Transverse colon (tissue), 4 donors: ENCODE measurements at regions of chr16 and their contacts with region 1.

Region 1: DNA sequence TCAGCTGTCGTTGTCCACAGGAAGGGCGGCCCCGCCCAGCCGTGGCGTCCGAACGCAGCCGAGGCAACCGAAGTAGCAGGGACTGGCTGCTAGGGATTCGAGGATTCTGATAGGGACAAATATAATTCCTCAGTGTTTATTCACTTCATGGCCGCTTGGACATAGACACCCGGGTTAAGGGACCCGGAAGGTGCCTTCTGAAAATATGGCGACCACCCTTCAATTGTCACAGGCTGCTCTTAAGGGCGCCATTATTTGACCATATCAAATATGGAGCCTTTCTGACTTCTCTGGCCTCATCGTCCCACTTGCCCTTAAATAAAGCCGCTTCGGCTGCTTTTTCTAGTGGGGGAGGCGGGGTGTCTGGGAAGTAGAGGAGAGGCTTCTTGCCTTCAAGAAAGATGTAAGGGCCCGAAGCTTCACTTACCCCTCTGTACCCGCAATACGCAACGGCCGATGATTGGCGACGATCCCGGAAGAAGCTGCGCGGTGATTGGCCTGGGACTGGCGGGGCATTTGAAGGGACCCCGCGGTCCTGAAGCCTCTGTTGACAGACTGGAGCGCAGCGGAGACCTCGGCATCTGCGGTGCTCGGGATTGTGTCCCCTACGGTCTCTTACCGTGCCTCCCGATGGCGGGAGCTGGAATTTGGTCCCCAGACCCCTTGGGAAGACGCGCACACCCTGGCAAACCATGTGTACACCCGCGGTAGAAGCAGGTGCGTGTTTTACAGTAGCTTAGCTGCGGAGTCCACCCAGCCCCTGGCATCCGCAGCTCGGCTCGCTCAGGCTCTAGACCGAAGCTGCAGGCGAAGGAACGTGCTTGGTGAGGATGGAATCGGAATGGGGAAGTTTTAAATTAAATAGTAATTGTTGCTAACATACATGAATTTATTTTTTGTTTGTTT is at the start of gene ZNF688:
- DNase-seq: peak; percentile 96
- H3K4me3 ChIP-seq: peak within 1 kb of the TSS; percentile 81 to 92 (median 82)
- H3K27ac ChIP-seq: peak within 1 kb of the TSS; percentile 99 to 100 (median 99)
- H3K4me1 ChIP-seq: peaks cover 12 to 34% (median 24%) of the 10 kb centered on the region in 4 donors
- H3K27me3 ChIP-seq: no peaks in the 10 kb centered on the region
- CTCF ChIP-seq: peak in 1 of 5 experiments; percentile 39
- EP300 ChIP-seq: no peak
- POLR2A ChIP-seq: peak; percentile 74
- total RNA-seq, gene ZNF688: 22.9 to 64.3 (median 43.5) TPM

Region 2: GRCh38 chr16:30628627-30629540 is 56.9 kb after region 1 on chr16:
- in situ Hi-C with region 1: loop called in 1 of 4 experiments (anchors 10 kb)
- intact Hi-C with region 1: loop called (anchors 10 kb)
- DNase-seq: peak; percentile 93
- H3K4me3 ChIP-seq: peak overlapping the region in 2 of 4 donors; percentile 14 to 24
- H3K27ac ChIP-seq: peak overlapping the region; percentile 44 to 68 (median 64)
- H3K4me1 ChIP-seq: peaks cover 0 to 10% (median 4%) of the 10 kb centered on the region in 4 donors
- H3K27me3 ChIP-seq: no peaks in the 10 kb centered on the region
- CTCF ChIP-seq: peak; percentile 87 to 96 (median 89)
- EP300 ChIP-seq: no peak
- POLR2A ChIP-seq: no peak

Region 3: DNA sequence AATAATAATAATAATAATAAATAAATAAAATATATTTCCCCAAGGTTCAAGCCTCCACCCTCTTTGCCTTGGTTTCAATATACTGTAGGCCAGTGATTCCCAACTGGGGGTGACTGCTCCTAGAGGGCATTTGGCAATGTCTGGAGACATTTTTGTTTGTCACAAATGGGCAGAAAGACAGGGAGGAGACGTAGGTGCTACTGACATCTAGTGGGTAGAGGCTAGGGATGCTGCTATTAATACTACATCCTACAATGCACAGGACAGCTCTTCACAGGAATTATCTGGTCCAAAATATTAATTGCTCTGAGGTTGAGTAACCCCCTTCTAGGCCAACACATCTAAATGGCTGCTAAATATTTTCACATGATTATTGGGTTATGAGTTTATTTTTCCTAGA is 66.0 kb after region 1 on chr16:
- in situ Hi-C with region 1: loop called in 1 of 4 experiments (anchors 10 kb)
- intact Hi-C with region 1: no loop called
- DNase-seq: no peak
- H3K4me3 ChIP-seq: no peak overlapping the region
- H3K27ac ChIP-seq: no peak overlapping the region
- H3K4me1 ChIP-seq: peaks cover 0 to 22% (median 8%) of the 10 kb centered on the region in 4 donors
- H3K27me3 ChIP-seq: no peaks in the 10 kb centered on the region
- CTCF ChIP-seq: peak in 3 of 5 experiments; percentile 12 to 13 (median 13)
- EP300 ChIP-seq: no peak
- POLR2A ChIP-seq: no peak

Region 4: GRCh38 chr16:30853758-30854157 is 281.8 kb after region 1 on chr16:
- in situ Hi-C with region 1: no loop called
- intact Hi-C with region 1: no loop called
- DNase-seq: no peak
- H3K4me3 ChIP-seq: no peak overlapping the region
- H3K27ac ChIP-seq: no peak overlapping the region
- H3K4me1 ChIP-seq: no peaks in the 10 kb centered on the region
- H3K27me3 ChIP-seq: no peaks in the 10 kb centered on the region
- CTCF ChIP-seq: no peak
- EP300 ChIP-seq: no peak
- POLR2A ChIP-seq: no peak